Heart right ventricle (tissue), 16 donors: ENCODE measurements at regions of chr2 and their contacts with region 1.

Region 1: DNA sequence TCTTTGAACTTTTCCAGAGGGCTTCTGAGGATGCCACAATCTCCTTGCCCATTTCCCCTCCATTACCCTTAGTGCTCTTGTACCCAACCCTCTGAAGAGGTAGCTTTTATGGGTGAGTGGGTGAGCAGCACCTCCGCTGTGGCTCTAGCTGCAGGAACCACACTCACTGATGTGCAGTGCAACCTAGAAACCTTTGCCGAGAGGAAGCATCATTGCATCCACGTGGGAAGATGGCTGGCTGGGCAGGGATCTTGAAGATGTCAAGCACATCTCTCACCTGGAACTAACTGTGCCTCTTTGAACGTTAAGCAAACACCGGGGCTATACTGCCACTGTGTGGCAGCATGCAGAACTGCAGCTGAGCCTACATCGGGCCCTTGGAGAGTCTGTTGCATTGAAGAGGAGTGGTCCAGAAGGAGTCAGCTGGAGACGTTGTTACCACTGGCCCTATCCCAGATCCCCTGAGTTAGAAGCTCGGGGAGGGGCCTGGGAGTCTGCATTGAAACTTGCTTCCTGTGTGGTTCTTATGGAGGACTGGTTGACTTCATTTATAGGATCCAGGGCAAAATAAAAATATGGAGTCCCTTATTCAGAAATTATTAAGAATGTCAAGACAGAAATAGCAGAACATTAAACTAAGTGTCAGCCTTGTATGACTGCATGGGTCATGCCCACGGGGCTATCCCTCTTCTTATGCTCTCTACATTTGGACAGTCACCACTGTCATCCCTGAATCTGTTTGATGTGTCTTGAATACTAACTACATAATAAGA is 28.7 kb downstream of the IGFBP5 start:
- DNase-seq: peak; percentile 54 to 65
- ATAC-seq: peak; percentile 57 to 87 (median 68)
- H3K4me3 ChIP-seq: no peak overlapping the region
- H3K27ac ChIP-seq: no peak overlapping the region
- H3K4me1 ChIP-seq: peaks cover 0 to 22% (median 20%) of the 10 kb centered on the region in 9 donors
- H3K27me3 ChIP-seq: no peaks in the 10 kb centered on the region
- CTCF ChIP-seq: peak; percentile 95 to 100 (median 98)

Region 2: DNA sequence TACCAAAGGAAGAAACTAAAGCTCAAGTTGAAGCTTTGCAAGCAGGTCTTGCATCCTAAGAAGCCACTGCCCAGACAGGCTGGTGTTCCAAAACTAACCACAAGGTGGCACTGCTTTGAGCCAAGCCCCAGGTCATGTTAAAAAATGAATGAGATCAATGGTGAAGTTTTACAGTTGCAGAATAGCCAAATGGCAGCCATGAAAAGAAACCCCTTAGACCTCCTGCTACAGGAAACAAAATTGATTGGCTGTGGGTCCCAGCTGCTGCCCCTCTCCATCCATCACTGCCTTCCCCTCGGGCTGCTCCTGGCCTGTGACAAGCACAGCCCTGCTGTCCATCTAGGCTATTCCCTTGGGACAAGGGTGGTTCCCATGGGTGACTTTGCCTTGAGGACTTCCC is 632.6 kb before region 1 on chr2:
- intact Hi-C with region 1: loop called in 3 of 10 experiments (anchors 10 kb)
- DNase-seq: peak; percentile 44 to 54
- ATAC-seq: peak in 5 of 8 donors; percentile 50 to 70 (median 56)
- H3K4me3 ChIP-seq: no peak overlapping the region
- H3K27ac ChIP-seq: no peak overlapping the region
- H3K4me1 ChIP-seq: peaks cover 0 to 6% (median 0%) of the 10 kb centered on the region in 9 donors
- H3K27me3 ChIP-seq: no peaks in the 10 kb centered on the region
- CTCF ChIP-seq: peak; percentile 70 to 93 (median 91)

Region 3: DNA sequence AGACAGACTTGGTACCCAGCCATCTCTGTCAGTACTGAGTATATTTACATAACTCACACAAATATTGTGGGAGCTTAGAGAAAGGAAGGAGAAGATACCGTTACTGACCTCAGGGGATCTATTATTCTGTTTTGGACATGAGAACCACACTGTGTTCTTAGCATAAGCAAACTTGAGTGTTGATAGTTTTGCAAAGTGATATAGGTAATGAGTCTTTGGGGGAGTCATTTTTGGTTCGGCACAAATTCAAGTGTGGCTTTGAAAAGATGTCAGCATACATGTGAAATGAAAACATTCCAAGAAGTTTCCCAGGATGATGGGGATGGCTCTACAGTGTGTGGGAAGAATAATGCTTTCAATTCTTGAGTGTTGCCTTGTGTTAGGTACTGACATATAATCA is 230.3 kb before region 1 on chr2:
- intact Hi-C with region 1: no loop called
- DNase-seq: no peak
- ATAC-seq: no peak
- H3K4me3 ChIP-seq: no peak overlapping the region
- H3K27ac ChIP-seq: no peak overlapping the region
- H3K4me1 ChIP-seq: no peaks in the 10 kb centered on the region
- H3K27me3 ChIP-seq: no peaks in the 10 kb centered on the region
- CTCF ChIP-seq: no peak

Region 4: GRCh38 chr2:216619411-216620393 is 46.9 kb before region 1 on chr2:
- intact Hi-C with region 1: loop called in 1 of 10 experiments (anchors 10 kb)
- DNase-seq: no peak
- ATAC-seq: peak in 3 of 8 donors; percentile 22 to 28 (median 23)
- H3K4me3 ChIP-seq: no peak overlapping the region
- H3K27ac ChIP-seq: no peak overlapping the region
- H3K4me1 ChIP-seq: peaks cover 0 to 25% (median 5%) of the 10 kb centered on the region in 9 donors
- H3K27me3 ChIP-seq: no peaks in the 10 kb centered on the region
- CTCF ChIP-seq: no peak

Region 5: GRCh38 chr2:216713691-216714336 is 47.2 kb after region 1 on chr2:
- intact Hi-C with region 1: no loop called
- DNase-seq: peak; percentile 63 to 71
- ATAC-seq: peak; percentile 49 to 79 (median 68)
- H3K4me3 ChIP-seq: no peak overlapping the region
- H3K27ac ChIP-seq: peak overlapping the region in 7 of 10 donors; percentile 36 to 54 (median 45)
- H3K4me1 ChIP-seq: peaks cover 2 to 49% (median 20%) of the 10 kb centered on the region in 9 donors
- H3K27me3 ChIP-seq: peaks cover 0 to 5% (median 0%) of the 10 kb centered on the region in 7 donors
- CTCF ChIP-seq: no peak